PC-9 (cell line): ENCODE measurements at regions of chr10 and their contacts with region 1.

Region 1: DNA sequence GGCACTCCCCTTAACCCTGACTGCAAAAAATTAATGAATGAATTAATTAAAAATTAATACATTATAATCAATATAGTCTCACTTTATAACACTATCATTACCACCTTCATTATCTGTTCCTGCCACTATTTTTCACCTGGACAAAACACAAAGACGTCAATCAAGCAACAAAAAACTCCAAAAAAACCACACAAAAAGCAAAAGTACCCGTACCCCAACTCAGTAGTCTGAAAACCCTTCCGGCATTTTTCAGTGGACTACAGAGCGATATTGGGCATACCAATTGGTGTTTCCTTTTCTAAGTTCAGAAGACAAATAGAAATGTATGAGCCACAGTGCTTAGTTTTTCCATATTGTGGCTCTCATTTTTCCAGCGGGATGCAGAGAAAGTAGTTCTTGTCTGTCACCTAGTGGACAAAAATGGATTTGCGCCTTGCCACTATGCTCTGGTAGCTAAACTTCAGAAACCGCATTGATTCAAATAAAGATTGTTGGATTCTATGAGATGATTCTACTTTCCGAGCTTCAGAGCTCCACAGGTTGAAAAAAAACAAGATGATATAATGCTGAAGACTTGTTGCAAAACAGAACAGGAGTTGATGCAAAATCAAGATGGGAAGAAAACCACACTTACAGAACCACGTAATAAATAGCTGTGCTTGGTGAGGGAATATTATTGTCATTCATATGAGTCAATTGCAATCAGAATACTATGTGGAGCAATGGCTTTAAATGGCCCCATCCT is 50.6 kb upstream of the ITGB1 start:
- DNase-seq: peak; percentile 63 to 81
- H3K4me3 ChIP-seq: no peak overlapping the region
- H3K27ac ChIP-seq: peak overlapping the region; percentile 92
- H3K4me1 ChIP-seq: peaks cover 67% of the 10 kb centered on the region
- H3K27me3 ChIP-seq: no peaks in the 10 kb centered on the region
- CTCF ChIP-seq: peak; percentile 93

Region 2: GRCh38 chr10:31928549-31929260 is 1080.0 kb before region 1 on chr10 and contains the start of gene ARHGAP12:
- CTCF ChIA-PET with region 1: no interaction called
- POLR2A ChIA-PET with region 1: interaction called, 13 read pairs
- intact Hi-C with region 1: no loop called
- DNase-seq: peak; percentile 51 to 91
- H3K4me3 ChIP-seq: peak within 1 kb of the TSS; percentile 77
- H3K27ac ChIP-seq: peak within 1 kb of the TSS; percentile 69
- H3K4me1 ChIP-seq: peaks cover 49% of the 10 kb centered on the region
- H3K27me3 ChIP-seq: no peaks in the 10 kb centered on the region
- CTCF ChIP-seq: no peak
- total RNA-seq, gene ARHGAP12: 34.3 and 51.9 TPM in 2 replicates

Region 3: DNA sequence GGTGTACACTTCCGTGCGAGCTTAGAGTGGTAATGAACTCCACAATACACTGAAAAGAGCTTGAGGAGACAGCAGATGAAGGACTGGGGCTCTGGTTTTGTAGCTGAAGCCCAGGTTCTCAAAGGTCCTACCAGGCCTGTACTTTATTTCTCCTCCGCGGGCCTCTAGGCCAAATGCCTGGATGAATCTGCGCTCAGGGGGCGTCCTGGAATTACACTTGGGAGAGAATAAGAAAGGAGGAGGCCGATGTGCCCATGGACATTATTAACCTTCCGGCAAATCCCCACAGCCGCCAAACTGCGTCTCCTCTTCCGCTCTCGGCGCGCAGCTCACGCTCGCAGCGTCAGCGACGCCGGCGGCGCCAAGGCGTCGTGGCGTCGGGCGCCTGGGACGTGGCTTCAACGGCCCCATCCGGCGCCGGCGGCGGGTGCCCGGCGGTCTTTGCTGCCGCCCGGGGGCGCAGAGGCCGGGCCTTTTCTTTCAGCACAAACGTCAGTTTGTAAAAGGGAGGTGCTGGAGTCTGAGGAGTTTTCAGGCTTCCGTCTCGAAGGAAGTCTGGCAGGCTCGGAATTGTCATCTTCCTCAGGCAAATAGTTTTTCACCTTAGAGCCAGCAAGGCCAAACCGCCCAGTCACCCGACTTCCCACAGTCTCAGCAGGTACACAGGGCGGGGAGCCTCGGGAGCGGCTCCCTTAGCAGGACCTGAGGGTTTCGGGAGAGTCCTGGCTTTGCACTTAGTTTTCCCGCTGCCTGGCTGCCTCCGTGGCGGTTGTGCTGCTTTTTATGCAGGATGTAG is 562.7 kb before region 1 on chr10 and contains the start of gene CCDC7:
- CTCF ChIA-PET with region 1: no interaction called
- POLR2A ChIA-PET with region 1: no interaction called
- intact Hi-C with region 1: loop called (anchors 2 kb)
- DNase-seq: peak; percentile 70 to 84
- H3K4me3 ChIP-seq: peak within 1 kb of the TSS; percentile 91
- H3K27ac ChIP-seq: peak within 1 kb of the TSS; percentile 78
- H3K4me1 ChIP-seq: peaks cover 7% of the 10 kb centered on the region; the same call in 1 of the 2 replicates
- H3K27me3 ChIP-seq: no peaks in the 10 kb centered on the region
- CTCF ChIP-seq: peak; percentile 30; the same call in 1 of the 2 replicates
- total RNA-seq, gene CCDC7: 5.2 and 6.9 TPM in 2 replicates

Region 4: DNA sequence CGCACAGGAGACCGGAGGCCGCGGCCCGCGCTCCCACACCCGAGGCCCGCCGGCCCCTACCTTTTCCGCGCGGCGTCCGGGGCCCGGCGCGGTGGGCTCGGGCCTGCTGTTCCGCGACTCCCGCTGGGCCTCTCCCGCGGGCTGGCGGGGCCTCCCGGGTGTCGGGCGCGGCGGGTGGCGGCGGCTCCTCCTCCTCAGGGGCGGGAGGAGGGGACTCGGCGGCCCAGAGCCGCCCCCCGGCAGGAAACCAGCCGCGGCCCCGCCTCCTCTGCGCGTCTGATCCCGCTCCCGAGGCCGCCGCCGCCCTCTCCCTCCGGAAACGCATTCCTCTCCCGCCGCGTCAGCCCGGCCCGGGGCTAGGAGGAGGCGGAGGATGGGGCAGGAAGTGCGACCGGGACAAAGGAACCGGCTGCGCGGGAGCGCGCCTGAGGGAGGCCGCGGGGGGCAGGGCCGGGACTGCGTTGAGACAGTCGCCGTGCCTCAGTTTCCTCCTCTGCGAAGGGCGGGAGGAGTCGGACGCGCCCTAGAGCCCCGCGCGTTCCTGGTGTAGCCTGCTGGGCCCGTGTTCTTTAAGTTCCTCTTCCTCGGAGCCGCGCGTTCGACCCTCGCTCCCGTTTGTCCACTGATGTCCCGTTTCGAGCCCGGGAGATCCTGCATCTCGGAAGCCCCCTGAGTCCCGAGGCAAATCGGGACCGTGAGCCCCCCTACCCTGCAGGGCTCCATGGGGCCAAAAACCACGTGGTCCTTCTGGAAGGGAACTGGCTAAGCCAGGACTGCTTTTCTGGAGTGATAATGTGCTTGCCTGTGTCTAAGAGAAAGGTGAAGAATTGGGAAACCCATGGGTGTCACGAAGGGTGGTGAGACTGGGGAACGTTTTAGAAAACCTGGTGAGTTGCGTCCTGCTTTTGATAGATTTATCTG is 50.3 kb before region 1 on chr10 and contains the start of gene ITGB1:
- CTCF ChIA-PET with region 1: interaction called, 5 read pairs
- POLR2A ChIA-PET with region 1: interaction called, 6 read pairs
- intact Hi-C with region 1: loop called (anchors 1 kb)
- DNase-seq: peak; percentile 76 to 98
- H3K4me3 ChIP-seq: peak within 1 kb of the TSS; percentile 99
- H3K27ac ChIP-seq: peak within 1 kb of the TSS; percentile 95
- H3K4me1 ChIP-seq: peaks cover 65% of the 10 kb centered on the region
- H3K27me3 ChIP-seq: no peaks in the 10 kb centered on the region
- CTCF ChIP-seq: no peak
- total RNA-seq, gene ITGB1: 307 and 421 TPM in 2 replicates

Region 5: GRCh38 chr10:33115738-33116719 is 107.4 kb after region 1 on chr10:
- CTCF ChIA-PET with region 1: no interaction called
- POLR2A ChIA-PET with region 1: interaction called, 7 read pairs
- intact Hi-C with region 1: loop called (anchors 1 kb)
- DNase-seq: peak in 1 of 2 experiments; percentile 52
- H3K4me3 ChIP-seq: no peak overlapping the region
- H3K27ac ChIP-seq: no peak overlapping the region
- H3K4me1 ChIP-seq: peaks cover 37% of the 10 kb centered on the region
- H3K27me3 ChIP-seq: no peaks in the 10 kb centered on the region
- CTCF ChIP-seq: peak; percentile 43; the same call in 1 of the 2 replicates

Region 6: DNA sequence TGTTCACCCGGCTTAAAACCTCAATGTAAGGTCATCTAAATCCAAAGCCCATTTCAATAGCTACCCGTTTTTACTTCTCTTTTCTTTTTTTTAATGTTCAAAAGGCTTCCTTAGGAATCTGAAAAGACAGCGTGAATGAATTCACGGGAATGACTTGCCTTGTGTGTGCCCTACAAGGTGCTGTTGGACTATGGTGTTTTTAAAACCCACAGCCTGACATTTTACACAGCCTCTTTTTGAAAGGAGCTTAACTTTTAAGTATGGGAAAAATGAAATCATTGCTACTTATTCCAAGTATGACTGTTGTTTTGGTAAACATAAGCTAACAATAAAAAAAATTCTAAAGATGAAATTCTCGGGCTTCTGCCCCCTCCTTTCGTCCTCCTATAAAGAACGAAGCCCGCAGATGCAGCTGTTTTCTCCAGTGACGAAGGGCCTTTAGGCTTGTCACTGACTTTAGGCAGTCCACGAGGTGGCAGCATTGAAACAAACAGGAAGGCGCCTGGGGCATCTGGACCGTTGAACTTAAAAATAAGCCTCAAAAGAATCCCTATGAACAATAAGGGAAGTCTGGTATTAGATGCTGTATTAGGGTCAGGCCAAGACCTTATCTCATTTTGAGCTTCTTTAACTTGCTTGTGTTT is 184.5 kb after region 1 on chr10:
- CTCF ChIA-PET with region 1: interaction called, 3 read pairs
- POLR2A ChIA-PET with region 1: no interaction called
- intact Hi-C with region 1: loop called (anchors 1 kb)
- DNase-seq: peak; percentile 35 to 75
- H3K4me3 ChIP-seq: no peak overlapping the region
- H3K27ac ChIP-seq: no peak overlapping the region
- H3K4me1 ChIP-seq: no peaks in the 10 kb centered on the region
- H3K27me3 ChIP-seq: no peaks in the 10 kb centered on the region
- CTCF ChIP-seq: peak; percentile 66

Region 7: GRCh38 chr10:33330543-33331378 is 322.1 kb after region 1 on chr10:
- CTCF ChIA-PET with region 1: interaction called, 4 read pairs
- POLR2A ChIA-PET with region 1: no interaction called
- intact Hi-C with region 1: loop called (anchors 1 kb)
- DNase-seq: peak; percentile 54 to 79
- H3K4me3 ChIP-seq: peak overlapping the region; percentile 92
- H3K27ac ChIP-seq: peak overlapping the region; percentile 28; the same call in 1 of the 2 replicates
- H3K4me1 ChIP-seq: peaks cover 55% of the 10 kb centered on the region
- H3K27me3 ChIP-seq: no peaks in the 10 kb centered on the region
- CTCF ChIP-seq: peak; percentile 80